Activated T-helper 2 cell treated with anti-CD3 and anti-CD28 coated beads, Interferon-gamma antibody, Interleukin-2, Interleukin-4, amounts not matched to agents 10 μg/mL and 5 μg/mL and 100 μg/mL, durations not matched to agents 14 hours and 24 hours and 36 hours (primary cell): ENCODE measurements at regions of chr11 and their contacts with region 1.

Region 1: DNA sequence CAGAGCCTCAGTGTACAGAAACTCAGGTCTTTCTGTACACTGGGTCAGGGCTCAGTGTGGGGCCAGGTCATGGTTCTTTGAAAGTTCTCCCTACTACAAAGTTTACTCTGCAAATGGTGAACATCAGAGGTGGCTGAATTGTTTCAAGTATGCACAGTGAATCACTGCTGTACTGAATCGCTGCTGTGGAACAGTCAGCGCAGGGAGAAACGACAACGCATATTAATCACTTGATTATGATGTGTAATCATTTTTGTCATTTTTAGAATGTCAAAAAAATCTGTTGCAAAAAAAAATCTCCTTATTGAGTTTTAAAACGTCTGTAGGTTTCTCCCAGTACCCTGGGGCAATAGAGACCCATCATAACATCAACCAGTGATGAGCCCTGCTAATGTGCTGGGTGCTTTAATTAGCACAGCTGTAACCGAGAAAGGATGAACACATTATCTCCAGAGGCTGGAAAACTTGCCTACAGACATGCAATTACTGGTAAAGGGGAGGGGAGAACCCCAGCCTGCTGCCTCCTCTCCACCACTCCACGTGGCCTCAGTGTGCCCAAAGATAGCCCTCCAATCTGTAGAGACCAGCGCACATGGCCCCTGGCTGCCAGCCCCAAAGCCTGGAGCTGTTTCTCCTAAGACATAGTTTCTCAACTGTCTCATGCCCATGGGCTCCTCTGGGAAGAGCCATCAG is 12.8 kb downstream of the ARRB1 start:
- DNase-seq: no peak
- H3K4me3 Mint-ChIP-seq: no peak overlapping the region
- H3K27ac Mint-ChIP-seq: no peak overlapping the region
- H3K4me1 Mint-ChIP-seq: peaks cover 57% of the 10 kb centered on the region
- H3K27me3 Mint-ChIP-seq: no peaks in the 10 kb centered on the region

Region 2: DNA sequence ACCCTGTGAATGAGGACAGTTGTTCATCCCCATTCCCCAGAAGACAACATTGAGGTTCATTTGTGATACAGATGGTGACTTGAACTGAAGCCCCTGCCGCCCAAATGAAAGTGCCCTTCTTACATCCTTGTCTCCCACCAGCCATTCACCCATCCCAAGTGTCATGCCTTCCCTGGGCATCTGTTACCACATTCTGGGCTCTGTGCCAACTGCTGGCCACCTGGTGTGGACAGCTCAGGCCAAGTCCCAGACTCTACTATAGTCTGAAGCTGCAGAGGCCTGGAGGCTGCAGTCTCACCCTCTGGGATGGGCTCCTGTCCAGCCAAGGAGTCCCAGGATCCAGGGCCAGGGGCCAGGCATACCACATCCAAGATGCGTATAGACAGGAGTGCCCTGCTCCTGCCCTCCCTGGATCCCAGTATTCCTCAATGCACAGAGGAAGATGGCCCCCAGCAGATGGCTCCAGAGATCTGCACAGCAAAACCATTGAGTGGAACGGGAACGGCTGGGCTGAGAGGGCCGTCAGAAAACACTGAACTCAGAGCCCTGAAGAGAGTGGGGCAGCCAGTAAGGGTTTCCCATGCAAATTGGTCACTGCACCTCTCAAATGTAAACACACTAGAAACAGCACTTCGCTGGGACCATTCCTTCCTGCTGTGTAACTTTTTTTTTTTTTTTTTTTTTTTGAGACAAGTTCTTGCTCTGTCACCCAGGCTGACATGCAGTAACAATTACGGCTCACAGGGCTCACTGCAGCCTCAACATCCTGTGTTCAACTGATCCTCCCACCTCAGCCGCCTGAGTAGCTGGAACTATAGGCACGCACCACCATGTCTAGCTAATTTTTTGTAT is 10.0 kb before region 1 on chr11:
- intact Hi-C with region 1: loop called (anchors 1 kb)
- DNase-seq: peak; percentile 54
- H3K4me3 Mint-ChIP-seq: no peak overlapping the region
- H3K27ac Mint-ChIP-seq: peak overlapping the region; percentile 9
- H3K4me1 Mint-ChIP-seq: peaks cover 46% of the 10 kb centered on the region
- H3K27me3 Mint-ChIP-seq: no peaks in the 10 kb centered on the region